Activated T-helper 2 cell treated with anti-CD3 and anti-CD28 coated beads, Interferon-gamma antibody, Interleukin-2, Interleukin-4, amounts not matched to agents 10 μg/mL and 5 μg/mL and 100 μg/mL, durations not matched to agents 14 hours and 24 hours and 36 hours (primary cell): ENCODE measurements at regions of chr9 and their contacts with region 1.

Region 1: GRCh38 chr9:116149844-116150243 is 3.7 kb upstream of the PAPPA start:
- DNase-seq: no peak
- H3K4me3 Mint-ChIP-seq: no peak overlapping the region
- H3K27ac Mint-ChIP-seq: no peak overlapping the region
- H3K4me1 Mint-ChIP-seq: no peaks in the 10 kb centered on the region
- H3K27me3 Mint-ChIP-seq: peaks cover 36% of the 10 kb centered on the region

Region 2: DNA sequence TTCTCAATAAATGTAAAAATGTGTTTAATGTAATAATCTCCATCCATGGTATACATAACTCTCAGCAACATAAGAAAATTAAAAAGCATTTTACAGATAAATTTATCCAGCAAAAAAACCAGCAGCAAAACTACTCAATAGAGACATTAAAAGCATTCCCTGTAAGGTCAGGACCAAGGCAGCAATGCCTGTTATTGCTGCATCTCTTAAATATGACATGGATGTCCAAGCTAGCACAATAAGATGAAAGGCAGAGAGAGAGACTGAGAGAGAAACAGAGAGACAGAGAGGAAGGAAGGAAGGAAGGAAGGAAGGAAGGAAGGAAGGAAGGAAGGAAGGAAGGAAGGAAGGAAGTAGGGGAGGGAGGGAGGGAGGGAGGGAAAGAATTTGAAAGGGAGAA is 285.3 kb before region 1 on chr9:
- intact Hi-C with region 1: no loop called
- DNase-seq: no peak
- H3K4me3 Mint-ChIP-seq: no peak overlapping the region
- H3K27ac Mint-ChIP-seq: no peak overlapping the region
- H3K4me1 Mint-ChIP-seq: no peaks in the 10 kb centered on the region
- H3K27me3 Mint-ChIP-seq: no peaks in the 10 kb centered on the region

Region 3: GRCh38 chr9:116494815-116495634 is 345.2 kb after region 1 on chr9:
- intact Hi-C with region 1: no loop called
- DNase-seq: peak; percentile 8
- H3K4me3 Mint-ChIP-seq: no peak overlapping the region
- H3K27ac Mint-ChIP-seq: no peak overlapping the region
- H3K4me1 Mint-ChIP-seq: no peaks in the 10 kb centered on the region
- H3K27me3 Mint-ChIP-seq: no peaks in the 10 kb centered on the region

Region 4: GRCh38 chr9:116572095-116572748 is 422.4 kb after region 1 on chr9:
- intact Hi-C with region 1: loop called (anchors 5 kb)
- DNase-seq: no peak
- H3K4me3 Mint-ChIP-seq: no peak overlapping the region
- H3K27ac Mint-ChIP-seq: no peak overlapping the region
- H3K4me1 Mint-ChIP-seq: no peaks in the 10 kb centered on the region
- H3K27me3 Mint-ChIP-seq: no peaks in the 10 kb centered on the region

Region 5: DNA sequence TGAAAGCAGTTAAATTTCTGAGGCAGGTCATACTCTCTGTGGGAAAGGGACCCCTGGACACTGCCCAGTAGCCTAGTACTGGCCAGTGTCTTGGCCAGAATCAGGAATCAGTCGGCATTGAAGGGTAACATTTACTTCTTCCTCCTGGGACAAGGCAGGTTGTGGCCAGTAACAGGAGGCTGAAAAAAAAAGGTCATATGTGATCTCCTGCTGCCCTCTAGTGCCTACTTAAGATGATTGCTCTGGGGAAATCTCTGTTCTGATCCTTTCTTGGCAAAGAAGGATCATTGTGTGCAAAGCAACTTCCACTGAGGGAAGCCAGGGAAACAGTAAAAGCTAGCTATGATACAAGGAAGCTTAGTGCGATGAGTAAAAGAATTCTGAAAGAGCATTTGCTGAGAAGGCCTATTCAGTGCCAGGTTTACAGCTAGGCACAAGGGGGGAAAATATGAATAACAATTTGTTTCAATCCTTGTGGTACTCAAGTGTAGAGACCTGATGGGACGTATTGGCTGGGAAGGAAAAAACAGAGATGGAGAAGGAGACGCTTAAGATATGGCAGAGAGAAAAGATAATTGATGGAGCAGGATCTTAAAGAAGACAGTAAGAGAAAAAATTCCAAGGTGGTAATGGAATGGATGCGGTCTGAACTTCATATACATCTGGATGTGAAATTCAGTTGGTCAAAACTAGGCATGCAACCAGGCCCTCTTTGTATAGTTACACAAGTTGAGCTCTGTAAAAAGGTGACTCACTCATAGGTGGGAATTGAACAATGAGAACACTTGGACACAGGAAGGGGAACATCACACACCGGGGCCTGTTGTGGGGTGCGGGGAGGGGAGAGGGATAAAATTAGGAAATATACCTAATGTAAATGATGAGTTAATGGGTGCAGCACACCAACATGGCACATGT is 511.5 kb after region 1 on chr9:
- intact Hi-C with region 1: loop called (anchors 10 kb)
- DNase-seq: no peak
- H3K4me3 Mint-ChIP-seq: no peak overlapping the region
- H3K27ac Mint-ChIP-seq: no peak overlapping the region
- H3K4me1 Mint-ChIP-seq: no peaks in the 10 kb centered on the region
- H3K27me3 Mint-ChIP-seq: no peaks in the 10 kb centered on the region